Activated T-helper 1 cell treated with anti-CD3 and anti-CD28 coated beads, Interleukin-12 subunit alpha, Interleukin-12 subunit beta, Interleukin-2, Interleukin-4 antibody, amounts not matched to agents 30 ng/mL and 10 ng/mL and 1 ng/mL, durations not matched to agents 14 hours and 24 hours and 36 hours (primary cell): ENCODE measurements at regions of chr10 and their contacts with region 1.

Region 1: DNA sequence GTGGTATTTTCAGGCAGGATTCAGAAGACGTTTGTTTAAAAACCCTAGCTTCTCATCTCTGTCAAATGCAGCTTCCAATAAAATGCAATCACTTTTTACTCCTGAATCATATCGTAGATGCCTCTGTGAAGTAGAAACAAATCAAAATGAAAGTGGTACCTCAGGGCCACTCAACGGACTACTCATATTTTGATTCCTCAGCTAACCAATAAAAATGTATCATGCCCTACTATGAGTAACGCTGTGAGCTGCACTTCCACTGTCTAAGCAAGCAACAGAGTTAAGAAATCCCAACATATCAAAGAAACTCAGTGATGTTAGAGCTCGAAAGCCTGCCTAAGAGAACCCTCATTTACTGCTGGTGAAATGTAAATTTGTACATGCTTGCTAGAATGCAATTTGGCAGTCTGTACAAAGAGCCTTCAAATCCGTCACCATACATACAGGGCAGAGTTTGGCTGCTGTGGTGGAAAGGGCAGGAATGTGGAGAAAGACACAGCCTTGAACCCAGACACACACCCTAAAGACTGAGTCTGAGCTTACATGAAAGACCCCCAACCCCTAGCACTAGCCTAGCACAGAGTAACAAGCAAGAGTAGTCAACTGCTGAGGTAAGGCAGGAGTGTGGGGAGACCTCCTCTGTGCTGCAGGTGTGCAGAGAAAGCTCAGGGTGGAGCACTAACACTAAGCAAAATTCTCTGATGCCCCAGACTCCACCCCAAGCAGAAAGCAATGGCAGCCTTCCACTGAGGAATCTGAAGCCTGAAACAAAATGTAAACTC is 151.5 kb downstream of the ANK3 start:
- DNase-seq: no peak
- H3K4me3 Mint-ChIP-seq: peak overlapping the region; percentile 27
- H3K27ac Mint-ChIP-seq: peak overlapping the region; percentile 33
- H3K4me1 Mint-ChIP-seq: peaks cover 30% of the 10 kb centered on the region
- H3K27me3 Mint-ChIP-seq: no peaks in the 10 kb centered on the region

Region 2: GRCh38 chr10:59879361-59879913 is 358.7 kb before region 1 on chr10:
- intact Hi-C with region 1: loop called (anchors 5 kb)
- DNase-seq: no peak
- H3K4me3 Mint-ChIP-seq: peak overlapping the region; percentile 62
- H3K27ac Mint-ChIP-seq: peak overlapping the region; percentile 93
- H3K4me1 Mint-ChIP-seq: peaks cover 84% of the 10 kb centered on the region
- H3K27me3 Mint-ChIP-seq: no peaks in the 10 kb centered on the region

Region 3: GRCh38 chr10:60778214-60779029 is 540.3 kb after region 1 on chr10 and contains the start of gene CDK1:
- intact Hi-C with region 1: loop called (anchors 10 kb)
- DNase-seq: peak; percentile 97
- H3K4me3 Mint-ChIP-seq: peak within 1 kb of the TSS; percentile 99
- H3K27ac Mint-ChIP-seq: peak within 1 kb of the TSS; percentile 97
- H3K4me1 Mint-ChIP-seq: peaks cover 35% of the 10 kb centered on the region
- H3K27me3 Mint-ChIP-seq: peaks cover 2% of the 10 kb centered on the region
- total RNA-seq, gene CDK1: 100 and 104 TPM in 2 replicates